Caco-2 (cell line): ENCODE measurements at regions of chr1 and their contacts with region 1.

Region 1: GRCh38 chr1:228515200-228515834 is 28.1 kb downstream of the RNF187 start:
- DNase-seq: peak in 1 of 2 experiments; percentile 57
- H3K4me3 ChIP-seq: no peak overlapping the region
- H3K4me3 Mint-ChIP-seq: no peak overlapping the region
- H3K27ac Mint-ChIP-seq: no peak overlapping the region
- H3K4me1 ChIP-seq: no peaks in the 10 kb centered on the region
- H3K4me1 Mint-ChIP-seq: peaks cover 7% of the 10 kb centered on the region
- H3K27me3 ChIP-seq: no peaks in the 10 kb centered on the region
- H3K27me3 Mint-ChIP-seq: peaks cover 22% of the 10 kb centered on the region
- CTCF ChIP-seq: peak; percentile 70 to 90

Region 2: GRCh38 chr1:227330684-227331083 is 1184.6 kb before region 1 on chr1:
- CTCF ChIA-PET with region 1: no interaction called
- POLR2A ChIA-PET with region 1: no interaction called
- intact Hi-C with region 1: no loop called
- DNase-seq: no peak
- H3K4me3 ChIP-seq: no peak overlapping the region
- H3K4me3 Mint-ChIP-seq: no peak overlapping the region
- H3K27ac Mint-ChIP-seq: no peak overlapping the region
- H3K4me1 ChIP-seq: no peaks in the 10 kb centered on the region
- H3K4me1 Mint-ChIP-seq: no peaks in the 10 kb centered on the region
- H3K27me3 ChIP-seq: no peaks in the 10 kb centered on the region
- H3K27me3 Mint-ChIP-seq: no peaks in the 10 kb centered on the region
- CTCF ChIP-seq: no peak

Region 3: GRCh38 chr1:228131766-228132165 is 383.6 kb before region 1 on chr1:
- CTCF ChIA-PET with region 1: no interaction called
- POLR2A ChIA-PET with region 1: no interaction called
- intact Hi-C with region 1: loop called (anchors 1 kb)
- DNase-seq: peak in 1 of 2 experiments; percentile 29
- H3K4me3 ChIP-seq: no peak overlapping the region
- H3K4me3 Mint-ChIP-seq: peak overlapping the region; percentile 90
- H3K27ac Mint-ChIP-seq: peak overlapping the region; percentile 90
- H3K4me1 ChIP-seq: peaks cover 12% of the 10 kb centered on the region
- H3K4me1 Mint-ChIP-seq: no peaks in the 10 kb centered on the region
- H3K27me3 ChIP-seq: no peaks in the 10 kb centered on the region
- H3K27me3 Mint-ChIP-seq: no peaks in the 10 kb centered on the region
- CTCF ChIP-seq: no peak

Region 4: DNA sequence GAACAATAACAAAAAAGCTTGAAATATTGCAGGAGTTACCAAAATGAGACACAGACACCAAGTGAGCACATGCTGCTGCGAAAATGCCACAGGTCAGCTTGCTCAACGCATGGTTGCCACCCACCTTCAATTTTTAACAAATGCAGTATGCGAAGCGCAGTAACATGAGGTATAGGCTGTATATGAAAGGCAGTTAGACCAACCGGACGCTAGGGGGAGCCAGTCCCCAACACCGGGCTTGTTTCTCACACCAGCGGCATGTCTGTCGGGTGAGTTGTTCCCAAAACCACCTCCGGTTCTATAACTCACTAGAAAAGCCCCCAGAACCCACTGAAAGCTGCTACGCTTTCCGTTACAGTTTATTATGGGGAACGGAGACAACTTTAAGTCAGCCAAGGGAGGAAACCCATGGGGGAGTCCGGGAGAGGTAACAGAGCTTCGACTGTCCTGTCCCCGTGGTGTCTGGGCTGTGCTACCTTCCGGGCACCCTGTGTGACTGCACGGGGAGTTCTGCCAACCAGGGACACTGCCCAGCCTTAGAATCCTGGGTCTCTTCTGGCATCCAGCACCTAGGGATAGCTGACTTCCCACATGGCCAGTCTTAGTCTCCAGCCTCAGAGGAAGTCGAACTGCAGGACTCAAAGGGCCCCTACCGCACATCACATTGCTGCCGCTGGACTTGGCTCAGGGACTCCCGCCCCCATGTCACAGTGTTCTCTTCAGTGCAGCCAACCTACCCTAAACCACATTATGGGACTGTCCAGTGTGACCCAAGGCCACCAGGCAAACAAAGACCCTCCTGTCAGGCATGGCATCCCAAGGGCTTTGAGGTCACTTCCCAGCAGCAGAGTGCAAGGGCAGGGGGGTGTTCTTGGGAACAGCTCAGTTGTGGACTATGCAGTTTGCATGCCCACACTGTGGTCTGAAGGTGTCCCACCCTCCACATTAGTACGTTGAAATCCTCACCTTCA is 14.1 kb before region 1 on chr1:
- CTCF ChIA-PET with region 1: no interaction called
- POLR2A ChIA-PET with region 1: no interaction called
- intact Hi-C with region 1: loop called (anchors 1 kb)
- DNase-seq: peak; percentile 82 to 86
- H3K4me3 ChIP-seq: no peak overlapping the region
- H3K4me3 Mint-ChIP-seq: peak overlapping the region; percentile 25
- H3K27ac Mint-ChIP-seq: no peak overlapping the region
- H3K4me1 ChIP-seq: no peaks in the 10 kb centered on the region
- H3K4me1 Mint-ChIP-seq: no peaks in the 10 kb centered on the region
- H3K27me3 ChIP-seq: no peaks in the 10 kb centered on the region
- H3K27me3 Mint-ChIP-seq: no peaks in the 10 kb centered on the region
- CTCF ChIP-seq: peak; percentile 84 to 88

Region 5: GRCh38 chr1:228691926-228692325 is 176.6 kb after region 1 on chr1:
- CTCF ChIA-PET with region 1: no interaction called
- POLR2A ChIA-PET with region 1: no interaction called
- intact Hi-C with region 1: no loop called
- DNase-seq: peak in 1 of 2 experiments; percentile 63
- H3K4me3 ChIP-seq: no peak overlapping the region
- H3K4me3 Mint-ChIP-seq: no peak overlapping the region
- H3K27ac Mint-ChIP-seq: no peak overlapping the region
- H3K4me1 ChIP-seq: no peaks in the 10 kb centered on the region
- H3K4me1 Mint-ChIP-seq: no peaks in the 10 kb centered on the region
- H3K27me3 ChIP-seq: no peaks in the 10 kb centered on the region
- H3K27me3 Mint-ChIP-seq: no peaks in the 10 kb centered on the region
- CTCF ChIP-seq: peak; percentile 37 to 72